Stomach (tissue), 19 donors: ENCODE measurements at regions of chr1 and their contacts with region 1.

Region 1: DNA sequence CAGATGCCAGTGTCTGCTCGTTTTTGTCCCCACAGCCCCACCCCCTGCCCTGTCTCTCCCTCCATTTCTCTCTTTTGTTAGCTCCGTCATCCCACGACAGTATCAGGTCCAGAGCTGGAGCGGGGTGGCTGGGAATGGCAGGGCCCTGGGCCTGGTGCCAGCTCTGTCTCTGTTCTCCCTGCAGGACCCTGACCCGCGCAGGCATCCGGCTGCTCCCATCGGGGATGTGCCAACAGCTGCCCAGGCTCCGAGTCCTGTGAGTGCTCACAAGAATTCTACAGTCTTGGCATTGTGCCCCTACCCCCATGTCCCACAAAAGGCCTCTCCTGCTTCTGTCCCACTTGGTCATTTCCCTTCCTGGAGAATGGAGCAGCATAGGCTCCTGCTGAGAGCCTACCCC is 37.4 kb downstream of the UBE2T start:
- DNase-seq: peak in 1 of 2 donors; percentile 55
- H3K4me3 ChIP-seq: no peak overlapping the region
- H3K27ac ChIP-seq: no peak overlapping the region
- H3K4me1 ChIP-seq: no peaks in the 10 kb centered on the region
- H3K27me3 ChIP-seq: no peaks in the 10 kb centered on the region
- CTCF ChIP-seq: no peak
- EP300 ChIP-seq: no peak
- POLR2A ChIP-seq: no peak

Region 2: DNA sequence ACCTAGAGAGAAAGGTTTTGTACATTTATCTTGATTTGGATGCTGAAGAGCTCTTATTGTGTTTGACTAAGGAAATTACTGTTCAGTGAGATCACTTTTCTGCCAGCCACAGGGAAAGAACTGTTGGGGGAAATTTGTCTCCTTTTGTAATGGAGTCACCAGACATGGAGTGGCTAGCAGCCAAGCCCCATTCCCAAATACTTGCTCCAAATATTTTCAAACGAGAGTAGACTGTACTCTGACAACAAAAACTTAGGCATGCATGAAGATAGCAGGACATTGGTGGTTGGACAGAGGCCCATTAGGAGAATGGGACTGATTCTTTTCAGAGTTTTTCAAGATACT is 454.4 kb before region 1 on chr1:
- intact Hi-C with region 1: no loop called
- DNase-seq: peak in 1 of 2 donors; percentile 48
- H3K4me3 ChIP-seq: no peak overlapping the region
- H3K27ac ChIP-seq: peak overlapping the region in 3 of 5 donors; percentile 15 to 60 (median 40)
- H3K4me1 ChIP-seq: peaks cover 0 to 23% (median 13%) of the 10 kb centered on the region in 4 donors
- H3K27me3 ChIP-seq: no peaks in the 10 kb centered on the region
- CTCF ChIP-seq: no peak
- EP300 ChIP-seq: no peak
- POLR2A ChIP-seq: no peak

Region 3: DNA sequence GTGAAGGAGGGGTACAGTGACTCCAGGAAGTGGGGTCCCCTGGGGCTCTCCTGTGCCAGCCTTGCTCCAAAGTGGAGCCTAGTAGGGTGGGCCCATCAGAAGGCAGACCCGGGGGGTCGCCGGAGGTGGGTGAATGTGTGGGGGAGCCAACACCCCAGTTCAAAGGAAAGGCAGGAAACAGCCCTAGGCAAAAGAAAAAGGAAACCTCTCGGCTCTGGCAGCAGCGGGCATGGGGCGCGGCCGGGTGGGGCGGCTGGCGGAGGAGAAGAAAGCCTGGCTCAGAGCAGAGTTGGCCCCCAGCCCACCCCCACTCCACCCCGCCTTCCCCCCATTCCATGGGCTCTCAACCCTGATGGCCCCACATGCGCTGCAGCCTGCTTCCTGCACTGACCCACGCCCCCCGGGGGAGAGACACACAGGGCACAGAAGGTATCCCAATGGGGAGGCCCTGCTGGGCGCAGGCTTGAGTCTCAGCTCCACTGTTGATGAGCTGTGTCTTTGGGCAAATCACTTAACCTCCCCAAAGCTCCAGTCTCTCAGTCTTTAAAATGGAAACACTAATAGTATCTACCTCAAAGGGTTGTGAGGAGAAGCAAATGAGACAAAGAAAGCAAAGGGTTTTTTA is 105.0 kb before region 1 on chr1:
- intact Hi-C with region 1: loop called (anchors 5 kb)
- DNase-seq: peak; percentile 45 to 73
- H3K4me3 ChIP-seq: no peak overlapping the region
- H3K27ac ChIP-seq: peak overlapping the region in 1 of 5 donors; percentile 8
- H3K4me1 ChIP-seq: peaks cover 0 to 21% (median 9%) of the 10 kb centered on the region in 4 donors
- H3K27me3 ChIP-seq: peaks cover 0 to 41% (median 9%) of the 10 kb centered on the region in 3 donors
- CTCF ChIP-seq: no peak
- EP300 ChIP-seq: no peak
- POLR2A ChIP-seq: no peak

Region 4: GRCh38 chr1:202221911-202222909 is 82.2 kb before region 1 on chr1:
- intact Hi-C with region 1: no loop called
- DNase-seq: no peak
- H3K4me3 ChIP-seq: no peak overlapping the region
- H3K27ac ChIP-seq: no peak overlapping the region
- H3K4me1 ChIP-seq: peaks cover 0 to 4% (median 0%) of the 10 kb centered on the region in 4 donors
- H3K27me3 ChIP-seq: peaks cover 0 to 32% (median 10%) of the 10 kb centered on the region in 3 donors
- CTCF ChIP-seq: no peak
- EP300 ChIP-seq: no peak
- POLR2A ChIP-seq: no peak

Region 5: GRCh38 chr1:202247894-202248681 is 56.3 kb before region 1 on chr1:
- intact Hi-C with region 1: loop called (anchors 10 kb)
- DNase-seq: no peak
- H3K4me3 ChIP-seq: no peak overlapping the region
- H3K27ac ChIP-seq: no peak overlapping the region
- H3K4me1 ChIP-seq: no peaks in the 10 kb centered on the region
- H3K27me3 ChIP-seq: peaks cover 0 to 9% (median 0%) of the 10 kb centered on the region in 3 donors
- CTCF ChIP-seq: no peak
- EP300 ChIP-seq: no peak
- POLR2A ChIP-seq: no peak